Activated CD8-positive, alpha-beta memory T cell treated with anti-CD3 and anti-CD28 coated beads, Interleukin-2, amount 10 ng/mL, durations not matched to agents 7 days and 5 days (primary cell): ENCODE measurements at regions of chr1 and their contacts with region 1.

Region 1: DNA sequence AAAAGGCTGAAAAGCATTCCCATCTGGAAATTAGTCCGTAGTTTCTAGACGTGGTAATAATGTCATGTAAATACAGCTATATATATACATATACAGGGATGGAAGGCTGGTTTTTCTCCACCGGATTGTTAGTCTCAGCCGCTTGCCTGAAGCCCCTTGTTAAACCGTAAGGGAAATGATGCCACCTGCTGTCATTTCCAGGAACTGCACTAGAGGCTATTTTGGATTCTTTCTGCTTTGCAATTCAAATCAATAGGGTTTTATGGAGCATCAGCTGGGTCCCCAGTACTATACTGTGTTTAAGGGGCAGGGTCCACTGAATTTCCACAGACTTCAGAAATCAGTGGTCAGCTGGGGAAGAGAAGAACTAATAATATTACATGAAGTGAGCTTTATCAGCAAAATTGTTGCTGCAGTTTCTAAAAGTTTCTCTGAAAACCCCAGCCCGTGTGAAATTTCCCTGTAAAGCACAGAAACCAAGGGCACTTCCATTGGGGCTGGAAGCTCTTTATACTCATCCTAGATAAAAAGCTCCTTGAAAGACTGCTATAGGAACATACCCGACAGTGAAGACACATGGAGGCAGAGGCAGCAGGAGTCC is 33.8 kb upstream of the MPZL1 start:
- DNase-seq: peak; percentile 88
- ATAC-seq: peak; percentile 66
- H3K4me3 Mint-ChIP-seq: no peak overlapping the region
- H3K27ac Mint-ChIP-seq: peak overlapping the region; percentile 21
- H3K4me1 Mint-ChIP-seq: peaks cover 6% of the 10 kb centered on the region
- H3K27me3 Mint-ChIP-seq: no peaks in the 10 kb centered on the region

Region 2: GRCh38 chr1:167553136-167554027 is 134.6 kb before region 1 on chr1 and contains the start of gene CREG1:
- CTCF ChIA-PET with region 1: interaction called, 15 read pairs
- DNase-seq: peak; percentile 92
- ATAC-seq: peak; percentile 100
- H3K4me3 Mint-ChIP-seq: peak within 1 kb of the TSS; percentile 77
- H3K27ac Mint-ChIP-seq: peak within 1 kb of the TSS; percentile 62
- H3K4me1 Mint-ChIP-seq: peaks cover 37% of the 10 kb centered on the region
- H3K27me3 Mint-ChIP-seq: peaks cover 4% of the 10 kb centered on the region
- total RNA-seq, gene CREG1: 12.7 to 15.8 TPM

Region 3: GRCh38 chr1:167563579-167564246 is 124.3 kb before region 1 on chr1:
- CTCF ChIA-PET with region 1: interaction called, 17 read pairs
- DNase-seq: no peak
- ATAC-seq: no peak
- H3K4me3 Mint-ChIP-seq: no peak overlapping the region
- H3K27ac Mint-ChIP-seq: no peak overlapping the region
- H3K4me1 Mint-ChIP-seq: no peaks in the 10 kb centered on the region
- H3K27me3 Mint-ChIP-seq: peaks cover 8% of the 10 kb centered on the region

Region 4: GRCh38 chr1:167627865-167628641 is 60.0 kb before region 1 on chr1:
- CTCF ChIA-PET with region 1: interaction called, 25 read pairs
- DNase-seq: peak; percentile 93
- ATAC-seq: peak; percentile 82
- H3K4me3 Mint-ChIP-seq: peak overlapping the region; percentile 83
- H3K27ac Mint-ChIP-seq: peak overlapping the region; percentile 98
- H3K4me1 Mint-ChIP-seq: peaks cover 55% of the 10 kb centered on the region
- H3K27me3 Mint-ChIP-seq: no peaks in the 10 kb centered on the region

Region 5: DNA sequence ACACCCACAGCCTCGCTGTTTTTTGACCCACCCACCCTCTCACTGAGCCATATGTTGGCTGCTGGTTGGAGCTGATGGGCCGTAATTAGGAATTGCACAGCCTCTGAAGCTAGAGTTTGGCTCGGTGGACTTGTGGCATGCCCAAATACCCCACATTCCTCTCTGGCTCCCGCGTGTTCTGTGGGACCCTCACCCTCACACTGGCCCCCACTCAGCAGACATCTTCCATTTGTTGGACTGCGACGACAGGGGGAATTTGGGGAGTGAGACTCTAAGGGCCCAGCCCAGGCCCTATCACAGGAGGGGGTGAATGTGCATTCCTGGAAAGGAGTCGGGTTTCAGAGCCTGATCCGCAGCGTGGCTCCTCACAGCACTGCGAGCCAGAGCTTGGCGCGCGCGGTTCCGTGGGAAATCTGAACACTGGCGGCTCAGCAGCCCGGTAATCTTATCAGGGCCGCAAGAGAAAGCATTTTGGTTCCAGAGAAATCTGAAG is 52.8 kb before region 1 on chr1:
- CTCF ChIA-PET with region 1: interaction called, 25 read pairs
- DNase-seq: peak; percentile 38
- ATAC-seq: no peak
- H3K4me3 Mint-ChIP-seq: no peak overlapping the region
- H3K27ac Mint-ChIP-seq: peak overlapping the region; percentile 14
- H3K4me1 Mint-ChIP-seq: peaks cover 83% of the 10 kb centered on the region
- H3K27me3 Mint-ChIP-seq: no peaks in the 10 kb centered on the region

Region 6: GRCh38 chr1:167676205-167676915 is 11.7 kb before region 1 on chr1:
- CTCF ChIA-PET with region 1: interaction called, 26 read pairs
- DNase-seq: no peak
- ATAC-seq: no peak
- H3K4me3 Mint-ChIP-seq: no peak overlapping the region
- H3K27ac Mint-ChIP-seq: peak overlapping the region; percentile 52
- H3K4me1 Mint-ChIP-seq: peaks cover 28% of the 10 kb centered on the region
- H3K27me3 Mint-ChIP-seq: no peaks in the 10 kb centered on the region

Region 7: DNA sequence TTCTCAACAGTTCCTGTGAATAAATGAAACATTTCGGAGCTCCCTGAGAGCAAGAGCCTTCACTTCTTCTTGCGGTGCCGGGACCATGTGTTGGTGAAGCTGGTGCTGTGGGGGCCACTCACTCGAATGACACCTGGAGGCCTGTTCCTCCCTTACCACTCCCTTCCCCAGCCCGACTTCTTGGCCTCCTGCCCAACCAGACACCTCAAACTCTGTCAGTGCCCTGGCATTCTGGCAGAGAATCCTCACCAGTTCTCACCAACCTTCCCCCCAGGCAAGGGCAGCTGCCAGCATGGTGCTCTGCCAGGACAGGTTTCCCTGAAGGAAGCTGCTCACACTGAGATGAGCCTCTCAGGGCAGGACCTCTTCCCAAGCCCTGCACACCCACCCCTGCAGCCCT is 102.1 kb after region 1 on chr1:
- CTCF ChIA-PET with region 1: no interaction called
- DNase-seq: no peak
- ATAC-seq: no peak
- H3K4me3 Mint-ChIP-seq: no peak overlapping the region
- H3K27ac Mint-ChIP-seq: no peak overlapping the region
- H3K4me1 Mint-ChIP-seq: peaks cover 3% of the 10 kb centered on the region
- H3K27me3 Mint-ChIP-seq: no peaks in the 10 kb centered on the region